ENCODE measurements at regions of chr3 and their contacts with region 1.

Region 1: GRCh38 chr3:16511681-16512434 is 1.6 kb downstream of the RFTN1 start:
- DNase-seq: peak; percentile 43 to 90 (median 86)
- ATAC-seq: peak; percentile 86
- H3K4me3 ChIP-seq: peak overlapping the region; percentile 79
- H3K4me3 Mint-ChIP-seq: peak overlapping the region; percentile 82 to 98 (median 94)
- H3K27ac ChIP-seq: peak overlapping the region; percentile 88
- H3K27ac Mint-ChIP-seq: peak overlapping the region; percentile 87 to 99 (median 95)
- H3K4me1 ChIP-seq: peaks cover 56 to 71% of the 10 kb centered on the region in 2 donors
- H3K4me1 Mint-ChIP-seq: peaks cover 62 to 85% (median 75%) of the 10 kb centered on the region in 7 donors
- H3K27me3 ChIP-seq: no peaks in the 10 kb centered on the region
- H3K27me3 Mint-ChIP-seq: no peaks in the 10 kb centered on the region

Region 2: DNA sequence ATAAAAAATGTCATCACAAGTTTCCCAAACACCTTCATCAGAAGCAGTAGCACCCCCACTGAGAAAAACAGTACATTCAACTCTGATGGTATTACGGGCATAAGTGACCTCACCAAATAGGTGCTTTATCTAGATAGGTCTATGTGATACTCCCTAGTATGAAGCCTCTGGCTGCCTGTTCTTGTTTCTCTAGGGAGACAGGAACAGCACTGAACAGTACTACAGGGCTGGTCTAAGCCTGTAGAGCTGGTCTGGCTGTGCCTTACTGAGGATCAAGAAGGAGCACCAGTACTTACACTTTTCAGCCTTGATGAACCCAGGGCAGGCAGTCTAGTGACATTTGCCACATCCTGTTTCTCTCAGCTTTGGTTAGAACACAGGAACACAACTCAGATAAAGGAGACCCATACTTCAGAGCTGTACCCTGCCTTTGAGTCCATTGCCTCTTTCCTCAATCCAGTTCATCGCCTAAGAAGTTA is 210.9 kb before region 1 on chr3:
- CTCF ChIA-PET with region 1: no interaction called
- POLR2A ChIA-PET with region 1: interaction called, 6 read pairs
- intact Hi-C with region 1: loop called in 1 of 2 experiments (anchors 2 kb)
- DNase-seq: peak in 7 of 9 donors; percentile 68 to 86 (median 82)
- ATAC-seq: peak; percentile 86
- H3K4me3 ChIP-seq: peak overlapping the region; percentile 48
- H3K4me3 Mint-ChIP-seq: peak overlapping the region; percentile 78 to 96 (median 92)
- H3K27ac ChIP-seq: peak overlapping the region; percentile 66
- H3K27ac Mint-ChIP-seq: peak overlapping the region; percentile 86 to 98 (median 94)
- H3K4me1 ChIP-seq: peaks cover 78 to 95% of the 10 kb centered on the region in 2 donors
- H3K4me1 Mint-ChIP-seq: peaks cover 61 to 99% (median 96%) of the 10 kb centered on the region in 7 donors
- H3K27me3 ChIP-seq: no peaks in the 10 kb centered on the region
- H3K27me3 Mint-ChIP-seq: no peaks in the 10 kb centered on the region

Region 3: DNA sequence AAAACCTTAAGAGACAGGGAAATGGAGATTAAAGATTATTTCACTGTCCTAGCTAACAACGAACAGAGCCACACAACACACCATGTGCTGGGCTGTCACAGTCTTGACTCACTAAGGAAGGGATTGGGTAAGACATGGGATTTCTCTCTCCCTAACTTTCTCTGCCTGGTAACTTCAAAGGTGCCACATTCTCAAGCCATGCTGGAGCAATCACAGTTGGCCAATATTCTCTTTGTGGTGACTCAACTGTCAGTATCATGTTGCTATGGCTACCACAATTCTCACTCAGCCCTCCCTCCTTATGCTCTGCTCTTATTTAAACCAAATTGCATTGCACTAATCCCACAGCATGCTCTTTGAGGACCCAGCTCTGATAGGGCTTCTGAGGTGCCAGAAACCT is 172.9 kb before region 1 on chr3:
- CTCF ChIA-PET with region 1: no interaction called
- POLR2A ChIA-PET with region 1: interaction called, 3 read pairs
- intact Hi-C with region 1: loop called in 1 of 2 experiments (anchors 1 kb)
- DNase-seq: peak in 1 of 9 donors; percentile 29
- ATAC-seq: peak; percentile 76
- H3K4me3 ChIP-seq: no peak overlapping the region
- H3K4me3 Mint-ChIP-seq: peak overlapping the region in 7 of 10 donors; percentile 0 to 70 (median 46)
- H3K27ac ChIP-seq: peak overlapping the region; percentile 62
- H3K27ac Mint-ChIP-seq: peak overlapping the region; percentile 69 to 92 (median 81)
- H3K4me1 ChIP-seq: peaks cover 22% of the 10 kb centered on the region in 2 donors
- H3K4me1 Mint-ChIP-seq: peaks cover 48 to 87% (median 81%) of the 10 kb centered on the region in 7 donors
- H3K27me3 ChIP-seq: no peaks in the 10 kb centered on the region
- H3K27me3 Mint-ChIP-seq: no peaks in the 10 kb centered on the region

Region 4: DNA sequence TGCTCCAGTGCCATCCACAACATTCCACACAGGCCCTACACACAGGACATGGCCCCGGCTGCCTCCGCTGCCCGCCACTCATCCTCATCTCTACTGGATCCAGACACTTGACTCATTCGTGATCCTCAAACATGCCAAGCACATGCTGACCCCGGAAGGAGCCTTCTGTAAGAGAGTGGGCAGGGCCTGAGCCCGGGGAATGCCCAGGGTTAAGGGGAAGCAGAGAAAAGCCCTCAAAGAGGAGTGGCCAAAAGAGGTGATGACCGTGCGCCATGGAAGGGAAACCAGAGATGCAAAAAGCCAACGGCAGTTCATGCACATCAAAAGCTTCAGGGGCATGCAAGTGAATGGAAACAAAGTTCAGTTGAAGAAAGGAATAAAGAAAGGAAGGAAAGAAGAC is 44.5 kb before region 1 on chr3:
- CTCF ChIA-PET with region 1: no interaction called
- POLR2A ChIA-PET with region 1: interaction called, 6 read pairs
- intact Hi-C with region 1: loop called (anchors 1 kb)
- DNase-seq: peak in 8 of 9 donors; percentile 14 to 77 (median 39)
- ATAC-seq: peak; percentile 80
- H3K4me3 ChIP-seq: no peak overlapping the region
- H3K4me3 Mint-ChIP-seq: peak overlapping the region; percentile 68 to 86 (median 79)
- H3K27ac ChIP-seq: peak overlapping the region; percentile 68
- H3K27ac Mint-ChIP-seq: peak overlapping the region; percentile 49 to 99 (median 95)
- H3K4me1 ChIP-seq: peaks cover 6 to 44% of the 10 kb centered on the region in 2 donors
- H3K4me1 Mint-ChIP-seq: peaks cover 55 to 84% (median 67%) of the 10 kb centered on the region in 7 donors
- H3K27me3 ChIP-seq: no peaks in the 10 kb centered on the region
- H3K27me3 Mint-ChIP-seq: no peaks in the 10 kb centered on the region

Region 5: GRCh38 chr3:16496408-16497222 is 15.2 kb before region 1 on chr3:
- CTCF ChIA-PET with region 1: interaction called, 3 read pairs
- POLR2A ChIA-PET with region 1: interaction called, 10 read pairs
- intact Hi-C with region 1: loop called in 1 of 2 experiments (anchors 1 kb)
- DNase-seq: no peak
- ATAC-seq: peak; percentile 41
- H3K4me3 ChIP-seq: no peak overlapping the region
- H3K4me3 Mint-ChIP-seq: peak overlapping the region in 9 of 10 donors; percentile 41 to 71 (median 51)
- H3K27ac ChIP-seq: no peak overlapping the region
- H3K27ac Mint-ChIP-seq: peak overlapping the region; percentile 1 to 87 (median 60)
- H3K4me1 ChIP-seq: peaks cover 40 to 41% of the 10 kb centered on the region in 2 donors
- H3K4me1 Mint-ChIP-seq: peaks cover 51 to 77% (median 65%) of the 10 kb centered on the region in 7 donors
- H3K27me3 ChIP-seq: no peaks in the 10 kb centered on the region
- H3K27me3 Mint-ChIP-seq: no peaks in the 10 kb centered on the region

Region 6: DNA sequence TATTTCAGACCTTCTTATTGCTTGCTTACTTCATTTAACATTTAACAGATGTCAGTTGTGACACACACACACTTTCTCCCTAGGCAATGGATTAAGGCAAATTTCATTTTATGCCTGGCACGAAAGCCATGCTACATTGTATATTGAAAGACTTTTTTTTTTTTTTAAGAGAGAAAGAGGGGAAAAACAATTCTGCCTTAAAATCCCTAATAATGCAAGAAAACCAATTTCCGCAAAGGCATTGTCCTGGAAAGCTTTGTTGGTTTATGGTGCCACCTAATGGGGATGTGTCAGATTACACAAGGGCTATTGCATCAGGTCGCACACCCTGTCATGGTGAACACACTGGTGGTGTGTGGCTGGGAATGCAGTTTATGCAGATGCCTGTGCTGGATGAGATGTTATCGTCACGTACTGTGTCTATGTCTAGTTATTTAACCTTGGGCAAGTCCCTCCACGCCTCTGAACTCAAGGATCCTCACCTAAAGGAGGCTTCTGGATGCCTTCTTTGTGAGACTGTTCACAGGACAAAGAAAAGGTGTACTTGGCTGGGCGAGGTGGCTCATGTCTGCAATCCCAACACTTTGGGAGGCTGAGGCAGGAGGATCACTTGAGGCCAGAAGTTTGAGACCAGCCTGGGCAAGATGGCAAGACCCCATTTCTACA is 39.0 kb after region 1 on chr3:
- CTCF ChIA-PET with region 1: no interaction called
- POLR2A ChIA-PET with region 1: no interaction called
- intact Hi-C with region 1: loop called in 1 of 2 experiments (anchors 1 kb)
- DNase-seq: peak; percentile 36 to 82 (median 76)
- ATAC-seq: peak; percentile 98
- H3K4me3 ChIP-seq: no peak overlapping the region
- H3K4me3 Mint-ChIP-seq: peak overlapping the region in 1 of 10 donors; percentile 10
- H3K27ac ChIP-seq: no peak overlapping the region
- H3K27ac Mint-ChIP-seq: peak overlapping the region in 5 of 9 donors; percentile 16 to 67 (median 36)
- H3K4me1 ChIP-seq: peaks cover 0 to 4% of the 10 kb centered on the region in 2 donors
- H3K4me1 Mint-ChIP-seq: peaks cover 6 to 15% (median 7%) of the 10 kb centered on the region in 7 donors
- H3K27me3 ChIP-seq: no peaks in the 10 kb centered on the region
- H3K27me3 Mint-ChIP-seq: peaks cover 0 to 11% (median 9%) of the 10 kb centered on the region in 5 donors

Region 7: DNA sequence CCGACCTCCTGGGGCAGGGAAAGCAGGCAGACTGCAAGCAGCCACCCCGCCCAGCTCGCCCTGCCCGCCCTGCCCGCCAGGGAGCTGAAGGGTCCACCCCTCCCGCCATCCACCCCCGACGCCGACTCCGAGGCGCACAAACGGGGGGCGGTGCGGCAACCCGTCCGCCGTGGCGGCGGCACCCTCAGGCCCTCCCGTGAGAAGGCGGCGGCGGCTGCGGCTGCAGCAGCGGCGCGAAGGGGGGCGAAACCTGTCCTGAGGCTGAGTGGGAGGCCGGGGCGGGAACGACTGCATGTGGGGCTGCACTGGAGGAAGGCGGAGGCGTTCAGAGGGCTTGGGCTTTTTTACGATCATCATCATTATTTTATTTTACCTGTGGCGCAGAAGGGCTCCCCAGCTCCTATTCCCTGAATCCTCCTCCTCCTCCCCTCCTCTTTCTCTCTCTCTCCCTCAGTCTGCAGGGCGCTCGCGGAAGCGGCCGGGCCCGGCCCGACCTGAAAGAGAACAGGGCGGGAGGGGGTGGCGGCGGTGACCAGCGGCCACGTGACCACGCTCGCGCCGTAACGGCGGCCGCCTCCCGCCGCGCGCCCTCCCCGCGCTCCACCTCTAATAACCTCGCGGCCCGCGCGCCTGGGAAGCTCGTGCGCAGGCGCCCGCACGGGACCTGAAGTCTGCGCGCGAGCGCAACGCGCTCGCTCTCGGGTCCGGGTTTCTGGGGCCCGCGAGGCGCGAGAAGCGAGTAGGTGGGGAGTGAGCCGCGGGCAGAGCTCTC is 1230.4 kb after region 1 on chr3 and contains the start of gene TBC1D5:
- CTCF ChIA-PET with region 1: no interaction called
- POLR2A ChIA-PET with region 1: no interaction called
- intact Hi-C with region 1: loop called in 1 of 2 experiments (anchors 1 kb)
- DNase-seq: peak; percentile 77 to 91 (median 84)
- ATAC-seq: peak; percentile 95
- H3K4me3 ChIP-seq: peak within 1 kb of the TSS; percentile 72
- H3K4me3 Mint-ChIP-seq: peak within 1 kb of the TSS; percentile 79 to 96 (median 92)
- H3K27ac ChIP-seq: peak within 1 kb of the TSS; percentile 71
- H3K27ac Mint-ChIP-seq: peak within 1 kb of the TSS; percentile 74 to 96 (median 88)
- H3K4me1 ChIP-seq: peaks cover 6 to 8% of the 10 kb centered on the region in 2 donors
- H3K4me1 Mint-ChIP-seq: peaks cover 17 to 49% (median 39%) of the 10 kb centered on the region in 7 donors
- H3K27me3 ChIP-seq: no peaks in the 10 kb centered on the region
- H3K27me3 Mint-ChIP-seq: no peaks in the 10 kb centered on the region
- total RNA-seq, gene TBC1D5: 30.5 to 54.0 (median 40.3) TPM

Measured in naive thymus-derived CD4-positive, alpha-beta T cell (primary cell).